H1 (cell line): ENCODE measurements at regions of chr1 and their contacts with region 1.

Region 1: GRCh38 chr1:158007667-158008386 is 14.4 kb downstream of the KIRREL1 start:
- DNase-seq: no peak
- H3K4me3 ChIP-seq: no peak overlapping the region
- H3K27ac ChIP-seq: no peak overlapping the region
- H3K4me1 ChIP-seq: peaks cover 21 to 50% (median 41%) of the 10 kb centered on the region in 4 experiments
- H3K27me3 ChIP-seq: no peaks in the 10 kb centered on the region
- CTCF ChIP-seq: no peak
- EP300 ChIP-seq: no peak
- POLR2A ChIP-seq: no peak
- RAD21 ChIP-seq: no peak

Region 2: GRCh38 chr1:157916887-157917570 is 90.8 kb before region 1 on chr1:
- CTCF ChIA-PET with region 1: no interaction called
- POLR2A ChIA-PET with region 1: no interaction called
- DNase-seq: no peak
- H3K4me3 ChIP-seq: no peak overlapping the region
- H3K27ac ChIP-seq: no peak overlapping the region
- H3K4me1 ChIP-seq: no peaks in the 10 kb centered on the region; a peak in 1 of 7 replicates
- H3K27me3 ChIP-seq: 0 out of 7 replicates have a peak, but pooled peaks cover 0 to 4% (median 0%) of the 10 kb centered on the region in 4 experiments
- CTCF ChIP-seq: no peak
- EP300 ChIP-seq: no peak
- POLR2A ChIP-seq: no peak
- RAD21 ChIP-seq: no peak

Region 3: GRCh38 chr1:157932069-157932468 is 75.8 kb before region 1 on chr1:
- CTCF ChIA-PET with region 1: no interaction called
- POLR2A ChIA-PET with region 1: no interaction called
- DNase-seq: no peak
- H3K4me3 ChIP-seq: no peak overlapping the region
- H3K27ac ChIP-seq: no peak overlapping the region
- H3K4me1 ChIP-seq: no peaks in the 10 kb centered on the region
- H3K27me3 ChIP-seq: no peaks in the 10 kb centered on the region
- CTCF ChIP-seq: no peak
- EP300 ChIP-seq: no peak
- POLR2A ChIP-seq: no peak
- RAD21 ChIP-seq: no peak

Region 4: DNA sequence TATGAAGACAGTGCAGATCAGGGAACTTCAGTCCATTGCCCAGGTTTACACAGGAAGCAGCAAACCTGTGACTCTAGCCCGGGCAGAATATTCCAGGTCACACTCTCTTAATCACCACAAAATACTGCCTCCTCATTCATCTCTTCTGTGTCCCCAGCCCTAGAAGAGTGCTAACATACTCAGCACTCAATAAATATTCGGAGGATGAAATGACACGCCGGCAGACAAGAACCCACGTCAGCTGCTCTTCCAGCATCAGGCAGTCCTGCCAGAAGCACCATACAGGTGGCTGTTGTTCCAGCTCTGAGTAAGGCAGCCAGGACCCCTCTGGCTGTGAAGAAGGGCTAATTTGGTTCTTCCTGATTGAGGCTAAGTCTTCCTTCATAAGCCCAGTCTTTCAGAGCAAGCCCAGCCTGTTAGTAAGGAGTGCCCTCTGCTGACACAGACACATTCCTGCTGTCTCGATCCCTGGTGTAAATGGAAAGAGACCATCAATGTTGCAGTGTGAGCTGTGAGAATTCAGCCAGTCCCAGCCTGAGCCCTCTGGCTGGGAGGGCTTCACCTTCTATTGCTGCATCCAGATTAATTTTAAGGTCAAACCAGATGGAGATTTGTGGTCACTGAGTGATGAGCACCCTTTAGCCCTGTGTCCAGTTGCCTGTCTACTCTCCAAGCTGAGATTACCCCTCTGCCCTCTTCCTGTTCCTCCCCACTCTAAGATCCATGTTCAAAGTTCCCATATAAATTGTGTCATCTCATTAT is 59.3 kb before region 1 on chr1:
- CTCF ChIA-PET with region 1: no interaction called
- POLR2A ChIA-PET with region 1: no interaction called
- DNase-seq: peak in 1 of 2 experiments; percentile 39
- H3K4me3 ChIP-seq: no peak overlapping the region
- H3K27ac ChIP-seq: no peak overlapping the region
- H3K4me1 ChIP-seq: no peaks in the 10 kb centered on the region
- H3K27me3 ChIP-seq: no peaks in the 10 kb centered on the region
- CTCF ChIP-seq: peak; percentile 65 to 96 (median 91)
- EP300 ChIP-seq: no peak
- POLR2A ChIP-seq: no peak
- RAD21 ChIP-seq: peak; percentile 99

Region 5: DNA sequence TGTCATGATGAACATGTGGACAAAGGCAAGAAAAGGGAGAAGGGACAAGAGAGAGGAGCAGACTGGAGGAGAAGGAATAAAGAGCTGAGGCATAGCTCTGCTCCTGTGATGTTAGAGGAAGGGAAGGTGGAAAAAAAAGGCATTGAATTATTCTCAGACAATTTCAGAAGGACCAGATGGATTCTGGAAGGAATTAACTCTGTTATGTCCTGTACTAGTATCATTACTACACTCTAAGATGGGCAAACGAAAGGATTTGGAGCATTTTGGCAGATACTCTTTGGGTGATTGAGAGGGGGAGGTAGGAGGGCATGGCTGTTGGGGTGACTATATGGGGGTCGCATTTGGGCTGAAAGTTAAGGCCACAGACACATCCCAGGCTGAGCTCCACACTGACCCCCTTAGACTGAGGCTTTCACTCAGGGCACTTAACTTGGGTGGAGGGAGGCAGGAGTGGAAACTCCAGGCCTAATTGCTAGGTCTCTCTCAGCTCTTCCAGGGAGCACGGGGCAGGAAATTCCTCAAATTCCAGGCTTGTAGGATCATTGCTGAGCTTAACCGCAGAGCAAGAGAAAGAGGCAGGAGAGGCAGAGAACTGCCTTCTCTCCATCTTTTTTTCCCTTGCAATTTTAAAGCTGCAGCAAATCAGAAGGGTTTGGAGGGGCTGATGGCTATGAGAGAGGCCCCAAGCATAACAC is 11.5 kb after region 1 on chr1:
- CTCF ChIA-PET with region 1: interaction called, 1,615 read pairs
- POLR2A ChIA-PET with region 1: interaction called, 26 read pairs
- DNase-seq: peak in 1 of 2 experiments; percentile 57
- H3K4me3 ChIP-seq: peak overlapping the region in 1 of 4 experiments; percentile 40; a peak in 1 of 8 replicates
- H3K27ac ChIP-seq: peak overlapping the region; percentile 74
- H3K4me1 ChIP-seq: peaks cover 15 to 47% (median 23%) of the 10 kb centered on the region in 4 experiments
- H3K27me3 ChIP-seq: no peaks in the 10 kb centered on the region
- CTCF ChIP-seq: no peak
- EP300 ChIP-seq: 0 out of 3 replicates have a peak, but pooled peaks of 1 of the 2 experiments have one; percentile 22
- POLR2A ChIP-seq: peak; percentile 40 to 71
- RAD21 ChIP-seq: no peak